ENCODE measurements at regions of chr1 and their contacts with region 1.

Region 1: GRCh38 chr1:226560243-226560642 is 11.7 kb downstream of the STUM start:
- DNase-seq: no peak
- H3K4me3 ChIP-seq: no peak overlapping the region
- H3K27ac ChIP-seq: no peak overlapping the region
- H3K4me1 ChIP-seq: no peaks in the 10 kb centered on the region
- H3K27me3 ChIP-seq: peaks cover 0 to 3% (median 0%) of the 10 kb centered on the region in 5 experiments

Region 2: GRCh38 chr1:226547754-226548191 is 12.5 kb before region 1 on chr1:
- CTCF ChIA-PET with region 1: interaction called, 14 read pairs
- POLR2A ChIA-PET with region 1: no interaction called
- DNase-seq: peak; percentile 83 to 88 (median 86)
- H3K4me3 ChIP-seq: peak overlapping the region in 1 of 7 experiments; percentile 33
- H3K27ac ChIP-seq: no peak overlapping the region
- H3K4me1 ChIP-seq: peaks cover 0 to 24% (median 23%) of the 10 kb centered on the region in 4 experiments
- H3K27me3 ChIP-seq: peaks cover 2 to 49% (median 34%) of the 10 kb centered on the region in 5 experiments

Measured in common myeloid progenitor, CD34-positive (primary cell).